Activated CD4-positive, alpha-beta T cell treated with anti-CD3 and anti-CD28 coated beads, Interleukin-2, amount 10 ng/mL, durations not matched to agents 24 days and 14 days (primary cell): ENCODE measurements at regions of chr2 and their contacts with region 1.

Region 1: GRCh38 chr2:68203587-68203986 is 45.9 kb downstream of the PNO1 start:
- DNase-seq: peak; percentile 68
- H3K4me3 Mint-ChIP-seq: peak overlapping the region; percentile 64
- H3K27ac Mint-ChIP-seq: peak overlapping the region; percentile 86
- H3K4me1 Mint-ChIP-seq: peaks cover 50% of the 10 kb centered on the region
- H3K27me3 Mint-ChIP-seq: no peaks in the 10 kb centered on the region

Region 2: GRCh38 chr2:68238955-68239822 is 35.6 kb after region 1 on chr2:
- intact Hi-C with region 1: loop called (anchors 5 kb)
- DNase-seq: no peak
- H3K4me3 Mint-ChIP-seq: peak overlapping the region; percentile 14
- H3K27ac Mint-ChIP-seq: peak overlapping the region; percentile 68
- H3K4me1 Mint-ChIP-seq: peaks cover 47% of the 10 kb centered on the region
- H3K27me3 Mint-ChIP-seq: no peaks in the 10 kb centered on the region

Region 3: DNA sequence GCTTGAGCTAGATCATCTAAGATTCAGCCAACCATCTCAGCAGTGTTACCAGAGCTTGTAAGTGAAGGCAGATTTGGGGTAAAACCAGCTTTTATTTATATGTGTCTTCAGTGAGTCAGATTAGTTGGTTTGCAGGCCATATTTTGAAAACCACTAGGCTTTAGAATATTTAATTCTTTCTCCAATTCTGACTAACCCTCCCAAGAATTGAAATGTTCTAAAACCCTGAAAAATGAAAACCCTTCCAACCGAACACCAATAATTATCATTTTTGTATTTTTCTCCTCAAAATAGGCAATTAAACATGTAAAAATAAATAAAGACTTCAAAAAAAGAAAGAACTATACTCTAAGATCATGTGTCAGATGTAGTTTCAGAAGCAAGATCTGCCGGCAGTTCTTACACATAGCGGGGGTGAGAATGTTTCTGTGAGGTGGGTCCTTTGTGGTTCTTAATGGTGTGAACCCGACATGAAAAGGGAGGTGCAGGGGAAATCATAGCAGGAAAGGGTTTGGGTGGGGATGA is 175.7 kb after region 1 on chr2:
- intact Hi-C with region 1: loop called (anchors 5 kb)
- DNase-seq: peak; percentile 63
- H3K4me3 Mint-ChIP-seq: peak overlapping the region; percentile 3
- H3K27ac Mint-ChIP-seq: peak overlapping the region; percentile 40
- H3K4me1 Mint-ChIP-seq: peaks cover 11% of the 10 kb centered on the region
- H3K27me3 Mint-ChIP-seq: peaks cover 38% of the 10 kb centered on the region

Region 4: DNA sequence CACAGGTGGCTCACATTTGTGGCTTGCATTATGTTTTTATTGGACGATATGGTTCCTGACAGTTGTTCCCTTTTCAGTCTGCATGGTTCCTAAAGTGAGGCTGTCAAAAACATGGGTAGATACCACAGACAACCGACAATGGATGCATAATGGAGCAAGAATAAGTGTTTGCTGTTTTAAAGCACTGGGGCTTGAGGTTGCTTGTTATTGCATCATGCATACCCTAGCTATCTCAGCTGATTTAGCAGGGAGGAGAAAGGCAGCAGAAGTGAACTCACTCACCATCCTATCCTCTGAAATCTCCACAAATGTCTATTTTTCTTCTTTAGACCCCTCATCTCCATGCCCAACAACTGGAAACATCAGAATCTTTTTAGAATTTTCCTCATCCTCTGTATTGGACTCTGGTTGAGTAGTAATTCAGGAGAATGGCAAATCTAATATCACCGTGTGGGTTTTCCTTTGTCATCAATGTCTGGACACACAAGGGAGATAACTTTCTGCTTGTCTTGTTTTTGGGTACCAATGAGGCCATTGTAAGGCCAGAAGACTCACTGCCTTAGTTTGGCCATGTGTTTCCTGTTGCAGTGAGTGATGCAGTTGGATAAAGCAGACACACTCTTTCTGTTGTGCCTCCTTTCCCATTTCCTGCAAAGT is 216.8 kb after region 1 on chr2:
- intact Hi-C with region 1: no loop called
- DNase-seq: no peak
- H3K4me3 Mint-ChIP-seq: no peak overlapping the region
- H3K27ac Mint-ChIP-seq: no peak overlapping the region
- H3K4me1 Mint-ChIP-seq: peaks cover 7% of the 10 kb centered on the region
- H3K27me3 Mint-ChIP-seq: peaks cover 12% of the 10 kb centered on the region